Dendritic cell treated with granulocyte-macrophage colony-stimulating factor and Interleukin-4, amounts not matched to agents 40 ng/mL and 50 ng/mL, for 4 days (primary cell): ENCODE measurements at regions of chr19 and their contacts with region 1.

Region 1: GRCh38 chr19:3984908-3985642 is at the start of gene EEF2:
- H3K4me3 Mint-ChIP-seq: peak within 1 kb of the TSS; percentile 90
- H3K27ac Mint-ChIP-seq: peak within 1 kb of the TSS; percentile 92
- H3K4me1 Mint-ChIP-seq: peaks cover 39% of the 10 kb centered on the region
- H3K27me3 Mint-ChIP-seq: peaks cover 2% of the 10 kb centered on the region

Region 2: GRCh38 chr19:3866910-3867638 is 118.0 kb before region 1 on chr19:
- intact Hi-C with region 1: no loop called
- H3K4me3 Mint-ChIP-seq: no peak overlapping the region
- H3K27ac Mint-ChIP-seq: no peak overlapping the region
- H3K4me1 Mint-ChIP-seq: peaks cover 6% of the 10 kb centered on the region
- H3K27me3 Mint-ChIP-seq: peaks cover 52% of the 10 kb centered on the region

Region 3: DNA sequence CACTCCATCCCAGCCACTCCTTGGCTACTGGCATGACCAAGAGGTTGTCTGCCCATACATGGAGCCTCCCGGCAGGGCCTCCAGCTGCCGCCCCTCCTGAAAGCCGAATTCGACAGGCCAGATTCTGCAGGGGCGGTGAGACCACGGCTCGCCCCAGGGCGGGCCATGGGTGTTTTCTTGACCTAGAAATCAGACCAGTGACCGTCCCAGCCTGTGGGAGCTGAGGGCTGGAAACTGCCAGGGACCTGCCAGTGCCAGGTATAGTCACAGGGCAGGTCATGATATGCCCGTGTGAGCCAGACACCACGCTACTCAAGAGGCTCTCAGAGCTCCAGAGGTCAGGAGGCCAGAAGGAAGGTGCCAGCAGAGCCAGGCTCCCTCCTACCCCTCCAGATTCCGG is 31.0 kb before region 1 on chr19:
- intact Hi-C with region 1: no loop called
- H3K4me3 Mint-ChIP-seq: no peak overlapping the region
- H3K27ac Mint-ChIP-seq: no peak overlapping the region
- H3K4me1 Mint-ChIP-seq: peaks cover 15% of the 10 kb centered on the region
- H3K27me3 Mint-ChIP-seq: peaks cover 13% of the 10 kb centered on the region

Region 4: DNA sequence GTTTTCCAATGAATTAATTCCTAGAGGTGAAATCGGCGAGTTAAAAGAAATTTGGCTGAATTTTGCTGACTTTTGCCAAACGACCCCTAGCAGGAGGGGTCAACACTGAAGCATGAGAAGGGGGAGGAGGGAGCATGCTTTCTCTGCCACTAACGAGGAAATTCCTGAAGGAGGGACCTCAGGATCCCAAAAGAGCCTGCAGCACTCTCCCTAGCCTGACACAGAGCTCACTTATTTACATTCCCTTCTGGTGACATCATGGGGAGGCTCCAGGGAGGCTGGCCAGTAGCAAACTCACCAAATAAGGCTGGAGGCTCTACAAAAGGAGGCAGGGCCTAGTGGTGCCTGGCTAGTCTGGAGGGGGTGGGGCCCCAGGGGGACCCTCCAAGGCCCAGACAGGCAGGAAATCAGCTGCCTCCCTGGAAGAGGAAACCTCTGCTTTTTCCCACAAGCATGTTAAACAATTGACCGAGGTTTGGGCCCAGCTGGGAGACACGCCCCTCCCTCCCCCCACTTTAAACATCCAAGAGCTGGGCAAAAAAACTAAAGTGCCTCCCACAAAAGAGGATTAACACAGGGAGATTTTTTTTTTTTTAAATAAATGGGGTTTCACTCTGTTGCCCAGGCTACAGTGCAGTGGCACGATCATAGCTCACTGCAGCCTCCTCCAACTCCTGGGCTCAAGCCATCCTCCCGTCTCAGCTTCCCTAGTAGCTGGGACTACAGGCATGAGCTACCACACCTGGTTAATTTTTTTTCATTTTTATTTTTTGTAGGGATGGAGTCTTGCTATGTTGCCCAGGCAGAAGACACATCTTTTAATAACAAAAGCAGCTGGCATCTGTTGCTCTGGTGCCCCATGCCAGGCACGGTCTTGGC is 16.3 kb before region 1 on chr19:
- intact Hi-C with region 1: no loop called
- H3K4me3 Mint-ChIP-seq: no peak overlapping the region
- H3K27ac Mint-ChIP-seq: no peak overlapping the region
- H3K4me1 Mint-ChIP-seq: peaks cover 25% of the 10 kb centered on the region
- H3K27me3 Mint-ChIP-seq: no peaks in the 10 kb centered on the region

Region 5: DNA sequence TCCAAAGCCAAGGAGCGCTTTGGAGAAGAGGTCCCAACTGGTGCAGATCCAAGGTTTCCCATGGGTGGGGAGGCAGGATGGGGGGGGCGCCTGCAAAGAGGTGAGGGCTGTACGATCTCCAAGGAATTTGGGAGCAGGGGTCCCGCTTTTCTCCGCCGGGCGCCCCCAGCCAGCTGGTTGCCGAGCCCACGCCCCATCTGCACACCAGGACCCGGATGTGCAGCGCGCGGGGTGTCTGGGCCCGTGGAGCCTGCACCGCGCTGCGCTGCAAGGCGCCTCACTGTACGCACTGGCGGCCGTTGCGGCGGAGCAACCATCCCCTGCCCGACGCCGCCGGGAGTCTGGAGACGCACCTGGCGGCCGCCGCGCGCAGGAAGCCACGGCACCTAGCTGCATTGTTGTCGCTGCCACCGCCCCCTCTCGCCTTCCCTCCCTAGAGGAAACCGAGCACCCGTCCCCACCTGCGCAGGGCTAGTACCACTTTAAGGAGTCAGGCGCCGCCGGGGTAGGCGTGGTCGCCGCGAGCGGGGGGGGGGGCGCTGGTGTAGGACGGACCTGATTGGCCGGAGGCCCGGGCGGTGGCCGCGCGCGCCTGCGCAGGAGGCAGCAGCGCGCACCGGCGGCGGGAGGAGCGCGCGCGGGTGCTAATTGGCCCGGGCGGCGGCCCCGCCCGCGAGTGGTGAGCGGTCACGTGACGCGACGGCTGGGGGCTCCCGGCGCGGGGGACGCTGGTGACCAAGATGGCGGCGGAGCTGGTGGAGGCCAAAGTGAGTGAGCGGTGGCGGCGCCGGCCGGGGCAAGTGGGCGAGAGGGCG is 22.2 kb after region 1 on chr19 and contains the start of gene PIAS4:
- intact Hi-C with region 1: loop called (anchors 2 kb)
- H3K4me3 Mint-ChIP-seq: peak within 1 kb of the TSS; percentile 88
- H3K27ac Mint-ChIP-seq: peak within 1 kb of the TSS; percentile 87
- H3K4me1 Mint-ChIP-seq: peaks cover 40% of the 10 kb centered on the region
- H3K27me3 Mint-ChIP-seq: no peaks in the 10 kb centered on the region

Region 6: GRCh38 chr19:4182084-4182810 is 197.2 kb after region 1 on chr19 and contains the starts of genes ANKRD24 and SIRT6:
- intact Hi-C with region 1: loop called (anchors 5 kb)
- H3K4me3 Mint-ChIP-seq: peak within 1 kb of the TSS; percentile 99
- H3K27ac Mint-ChIP-seq: peak within 1 kb of the TSS; percentile 99
- H3K4me1 Mint-ChIP-seq: peaks cover 53% of the 10 kb centered on the region
- H3K27me3 Mint-ChIP-seq: peaks cover 6% of the 10 kb centered on the region

Region 7: GRCh38 chr19:4208385-4209094 is 223.5 kb after region 1 on chr19:
- intact Hi-C with region 1: loop called (anchors 10 kb)
- H3K4me3 Mint-ChIP-seq: no peak overlapping the region
- H3K27ac Mint-ChIP-seq: no peak overlapping the region
- H3K4me1 Mint-ChIP-seq: no peaks in the 10 kb centered on the region
- H3K27me3 Mint-ChIP-seq: peaks cover 15% of the 10 kb centered on the region